Calu3 (cell line): ENCODE measurements at regions of chr14 and their contacts with region 1.

Region 1: GRCh38 chr14:52919971-52920370 is 30.9 kb downstream of the FERMT2 start:
- DNase-seq: no peak
- H3K4me3 Mint-ChIP-seq: peak overlapping the region; percentile 52
- H3K27ac Mint-ChIP-seq: peak overlapping the region; percentile 98
- H3K4me1 Mint-ChIP-seq: peaks cover 55% of the 10 kb centered on the region
- H3K27me3 Mint-ChIP-seq: no peaks in the 10 kb centered on the region
- CTCF ChIP-seq: no peak

Region 2: DNA sequence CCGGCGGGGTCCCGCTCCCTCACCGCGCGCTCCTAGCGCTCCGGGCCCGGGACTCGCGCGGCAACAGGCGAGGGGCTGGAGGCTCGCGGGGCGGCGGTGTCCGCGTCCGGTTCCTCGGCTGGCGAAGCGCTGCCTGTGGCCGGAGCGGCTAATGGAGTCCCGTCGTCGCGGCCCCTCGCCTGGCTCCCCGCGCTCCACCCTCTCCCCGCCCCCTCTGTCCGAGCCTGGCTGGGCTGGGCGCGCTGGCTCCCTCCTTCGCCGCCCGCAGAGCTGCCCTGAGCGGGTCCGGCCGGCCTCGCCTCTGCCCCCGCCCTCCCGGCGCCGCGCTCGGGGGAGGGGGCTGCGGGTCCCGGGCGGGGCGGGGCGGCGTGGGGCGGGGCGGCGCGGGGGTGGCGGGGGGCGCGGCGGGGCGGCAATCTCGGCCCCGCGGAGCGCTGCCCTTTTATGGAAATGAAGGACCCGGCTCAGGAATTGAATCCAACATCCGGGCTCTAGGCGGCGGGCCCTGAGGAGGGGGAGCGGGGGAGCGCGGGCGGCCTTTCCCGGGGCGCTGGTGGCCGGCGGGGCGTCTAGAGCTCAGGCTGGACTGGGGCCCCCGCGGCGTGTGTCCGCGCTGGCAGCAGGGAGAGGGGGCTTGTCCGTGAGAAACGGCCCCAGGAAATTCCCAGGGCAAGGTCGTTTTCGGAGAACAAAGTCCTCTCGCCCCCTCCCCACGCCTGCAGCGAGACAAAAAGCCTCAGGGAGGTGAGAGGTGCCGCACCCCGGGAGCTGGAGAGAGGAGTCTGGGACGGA is 31.1 kb after region 1 on chr14 and contains the start of gene FERMT2:
- CTCF ChIA-PET with region 1: interaction called, 3 read pairs
- intact Hi-C with region 1: loop called (anchors 2 kb)
- DNase-seq: peak; percentile 91
- H3K4me3 Mint-ChIP-seq: peak within 1 kb of the TSS; percentile 94
- H3K27ac Mint-ChIP-seq: peak within 1 kb of the TSS; percentile 84
- H3K4me1 Mint-ChIP-seq: peaks cover 10% of the 10 kb centered on the region
- H3K27me3 Mint-ChIP-seq: no peaks in the 10 kb centered on the region
- CTCF ChIP-seq: no peak
- total RNA-seq, gene FERMT2: 21.0 and 21.6 TPM in 2 replicates